ENCODE measurements at regions of chr7 and their contacts with region 1.

Region 1: DNA sequence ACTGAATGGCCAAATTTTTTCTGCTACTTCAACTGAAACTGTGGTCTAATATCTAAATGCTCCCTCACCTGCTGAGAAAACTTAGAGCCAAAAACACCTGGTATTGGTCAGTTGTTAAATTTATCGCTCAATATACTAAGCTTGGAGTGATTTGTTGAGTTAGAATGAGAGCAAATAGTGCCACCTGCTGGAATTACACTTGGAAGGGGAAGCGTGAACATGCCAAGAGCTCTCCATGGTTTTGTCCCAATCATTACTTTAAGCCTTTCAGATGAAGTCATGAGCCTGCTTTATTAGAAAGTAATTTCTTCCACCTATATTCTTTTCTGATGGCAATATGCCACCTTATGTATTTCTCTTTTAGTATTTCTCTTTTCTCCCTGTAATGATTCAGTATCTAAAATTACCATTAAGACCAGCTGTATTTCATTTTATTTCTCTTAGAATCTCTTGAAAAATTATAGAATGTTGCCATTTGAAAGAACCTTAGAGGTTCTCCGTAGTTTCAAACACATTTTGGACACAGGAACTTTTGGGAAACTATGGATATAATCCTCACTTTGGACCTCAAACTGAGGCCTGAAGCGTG is 447.8 kb upstream of the C7orf33 start:
- DNase-seq: no peak
- ATAC-seq: peak; percentile 71
- H3K4me3 ChIP-seq: no peak overlapping the region
- H3K27ac ChIP-seq: no peak overlapping the region
- H3K4me1 ChIP-seq: no peaks in the 10 kb centered on the region
- H3K27me3 ChIP-seq: no peaks in the 10 kb centered on the region
- CTCF ChIP-seq: peak; percentile 54 to 58 (median 56)
- EP300 ChIP-seq: no peak
- POLR2A ChIP-seq: no peak
- RAD21 ChIP-seq: peak; percentile 59

Region 2: DNA sequence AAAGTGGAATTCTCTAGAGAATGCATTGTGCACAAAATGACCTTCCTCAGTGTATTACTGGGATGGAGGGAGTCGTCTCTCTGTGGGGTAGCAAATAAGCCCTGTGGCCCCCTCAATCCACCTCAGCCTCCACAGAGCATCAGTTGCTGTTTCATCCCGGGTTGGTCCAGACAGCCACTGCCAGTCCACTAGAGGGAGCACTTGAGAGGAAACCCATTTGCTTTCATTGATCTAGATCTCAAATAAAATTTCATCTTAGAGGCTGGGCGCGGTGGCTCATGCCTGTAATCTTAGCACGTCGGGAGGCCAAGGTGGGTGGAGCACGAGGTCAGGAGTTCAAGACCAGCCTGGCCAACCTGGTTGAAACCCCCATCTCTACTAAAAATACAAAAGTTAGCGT is 897.5 kb before region 1 on chr7:
- CTCF ChIA-PET with region 1: interaction called, 16 read pairs
- POLR2A ChIA-PET with region 1: no interaction called
- RAD21 ChIA-PET with region 1: no interaction called
- SMC1A ChIA-PET with region 1: interaction called, 3 read pairs
- in situ Hi-C with region 1: no loop called
- intact Hi-C with region 1: loop called (anchors 2 kb)
- DNase-seq: no peak
- ATAC-seq: peak; percentile 81
- H3K4me3 ChIP-seq: no peak overlapping the region
- H3K27ac ChIP-seq: no peak overlapping the region
- H3K4me1 ChIP-seq: no peaks in the 10 kb centered on the region
- H3K27me3 ChIP-seq: no peaks in the 10 kb centered on the region
- CTCF ChIP-seq: peak; percentile 60 to 80 (median 64); a peak in 5 of 6 replicates
- EP300 ChIP-seq: no peak
- POLR2A ChIP-seq: no peak
- RAD21 ChIP-seq: peak; percentile 62

Region 3: DNA sequence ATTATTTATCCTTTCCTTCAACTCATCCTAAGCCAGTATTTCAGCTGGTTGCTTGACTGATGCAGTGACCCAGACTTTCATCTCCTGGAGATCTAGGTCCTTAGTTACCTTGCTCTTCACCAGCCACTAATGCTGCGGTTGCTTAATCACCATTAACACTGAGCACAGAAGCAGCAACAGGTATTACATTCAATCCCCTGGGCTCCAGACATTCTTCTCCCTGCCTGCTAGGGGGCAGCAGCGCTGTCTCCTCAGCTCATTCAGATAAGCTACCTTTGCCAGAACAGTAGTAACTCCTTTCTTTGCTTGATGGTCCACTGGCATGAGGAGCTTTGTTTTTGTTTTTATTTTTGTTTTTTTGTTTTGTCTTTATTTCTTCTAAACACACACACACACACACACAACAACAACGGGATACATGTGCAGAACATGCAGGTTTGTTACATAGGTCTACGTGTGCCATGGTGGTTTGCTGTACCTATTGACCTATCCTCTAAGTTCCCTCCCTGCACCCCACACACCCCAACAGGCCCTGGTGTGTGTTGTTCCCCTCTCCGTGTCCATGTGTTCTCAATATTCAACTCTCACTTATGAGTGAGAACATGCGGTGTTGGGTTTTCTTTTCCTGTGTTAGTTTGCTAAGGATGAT is 595.4 kb before region 1 on chr7:
- CTCF ChIA-PET with region 1: interaction called, 9 read pairs
- POLR2A ChIA-PET with region 1: no interaction called
- RAD21 ChIA-PET with region 1: interaction called, 8 read pairs
- SMC1A ChIA-PET with region 1: interaction called, 6 read pairs
- in situ Hi-C with region 1: no loop called
- intact Hi-C with region 1: loop called (anchors 2 kb)
- DNase-seq: no peak
- ATAC-seq: peak; percentile 47; the same call in 1 of the 3 replicates
- H3K4me3 ChIP-seq: no peak overlapping the region
- H3K27ac ChIP-seq: no peak overlapping the region
- H3K4me1 ChIP-seq: no peaks in the 10 kb centered on the region
- H3K27me3 ChIP-seq: no peaks in the 10 kb centered on the region
- CTCF ChIP-seq: peak; percentile 33 to 42 (median 34); a peak in 5 of 6 replicates
- EP300 ChIP-seq: no peak
- POLR2A ChIP-seq: no peak
- RAD21 ChIP-seq: peak; percentile 54

Region 4: DNA sequence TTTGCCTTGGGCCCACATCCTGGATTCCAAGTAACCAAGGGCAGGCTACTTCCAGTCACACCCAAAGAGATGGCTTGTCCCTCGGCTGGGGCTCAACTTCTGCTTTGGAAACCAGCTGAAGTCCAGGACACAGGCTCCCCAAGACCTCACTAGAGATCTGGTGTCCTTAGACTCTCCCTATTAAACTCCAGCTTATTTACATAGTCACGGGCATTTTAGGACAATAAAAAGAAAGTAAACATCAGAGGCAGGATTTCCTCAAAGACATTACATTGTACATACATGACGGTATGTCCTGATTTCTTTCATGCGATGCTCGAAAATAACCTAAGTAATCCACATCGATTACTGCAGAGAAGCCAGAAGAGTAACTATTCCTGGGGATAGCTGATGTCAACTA is 13.7 kb before region 1 on chr7:
- CTCF ChIA-PET with region 1: interaction called, 21 read pairs
- POLR2A ChIA-PET with region 1: no interaction called
- RAD21 ChIA-PET with region 1: no interaction called
- SMC1A ChIA-PET with region 1: interaction called, 4 read pairs
- in situ Hi-C with region 1: no loop called
- intact Hi-C with region 1: no loop called
- DNase-seq: no peak
- ATAC-seq: no peak
- H3K4me3 ChIP-seq: no peak overlapping the region
- H3K27ac ChIP-seq: no peak overlapping the region
- H3K4me1 ChIP-seq: no peaks in the 10 kb centered on the region
- H3K27me3 ChIP-seq: no peaks in the 10 kb centered on the region
- CTCF ChIP-seq: no peak
- EP300 ChIP-seq: no peak
- POLR2A ChIP-seq: no peak
- RAD21 ChIP-seq: no peak

Region 5: DNA sequence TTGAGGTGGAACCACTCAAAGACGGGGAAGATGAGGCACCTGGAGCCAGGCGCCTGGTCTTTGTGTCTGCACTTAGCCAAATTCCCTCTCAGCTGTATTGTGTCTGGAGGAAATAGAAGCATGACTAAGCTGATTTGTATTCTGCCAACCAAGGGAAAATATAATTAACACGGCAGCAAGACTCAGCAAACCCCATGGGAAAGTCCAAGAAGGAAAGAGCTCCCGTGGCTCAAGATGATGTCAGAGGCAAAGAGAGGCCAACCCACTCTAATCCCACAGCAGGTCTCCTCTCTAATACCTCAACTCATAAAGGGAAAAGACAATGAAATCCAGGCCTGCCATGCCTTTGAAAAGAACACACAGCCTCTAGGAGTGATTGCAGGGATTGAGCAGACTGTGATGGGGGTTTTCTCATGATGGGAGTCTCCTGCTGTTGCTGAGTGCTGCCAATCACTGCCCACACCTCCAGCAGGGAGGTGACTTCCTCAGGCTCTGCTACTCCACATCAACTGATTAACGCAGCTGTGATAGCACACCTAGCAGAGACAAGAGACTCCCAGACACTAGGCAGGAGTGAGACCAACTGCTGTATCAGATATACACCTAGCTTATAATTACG is 192.3 kb after region 1 on chr7:
- CTCF ChIA-PET with region 1: no interaction called
- POLR2A ChIA-PET with region 1: no interaction called
- RAD21 ChIA-PET with region 1: no interaction called
- SMC1A ChIA-PET with region 1: no interaction called
- in situ Hi-C with region 1: no loop called
- intact Hi-C with region 1: no loop called
- DNase-seq: no peak
- ATAC-seq: no peak
- H3K4me3 ChIP-seq: no peak overlapping the region
- H3K27ac ChIP-seq: no peak overlapping the region
- H3K4me1 ChIP-seq: no peaks in the 10 kb centered on the region
- H3K27me3 ChIP-seq: peaks cover 4 to 21% of the 10 kb centered on the region in 2 experiments; a peak in 3 of 4 replicates
- CTCF ChIP-seq: no peak
- EP300 ChIP-seq: no peak
- POLR2A ChIP-seq: no peak
- RAD21 ChIP-seq: no peak